MCF 10A (cell line): ENCODE measurements at regions of chr9 and their contacts with region 1.

Region 1: GRCh38 chr9:6055213-6055612 is 39.8 kb upstream of the RANBP6 start:
- DNase-seq: peak; percentile 93
- H3K4me3 Mint-ChIP-seq: no peak overlapping the region
- H3K27ac Mint-ChIP-seq: no peak overlapping the region
- H3K4me1 Mint-ChIP-seq: peaks cover 11% of the 10 kb centered on the region
- H3K27me3 Mint-ChIP-seq: no peaks in the 10 kb centered on the region
- CTCF ChIP-seq: peak; percentile 72

Region 2: GRCh38 chr9:5799314-5799713 is 255.9 kb before region 1 on chr9:
- CTCF ChIA-PET with region 1: interaction called, 5 read pairs
- POLR2A ChIA-PET with region 1: interaction called, 4 read pairs
- intact Hi-C with region 1: loop called (anchors 1 kb)
- DNase-seq: peak; percentile 55
- H3K4me3 Mint-ChIP-seq: no peak overlapping the region
- H3K27ac Mint-ChIP-seq: no peak overlapping the region
- H3K4me1 Mint-ChIP-seq: peaks cover 6% of the 10 kb centered on the region
- H3K27me3 Mint-ChIP-seq: no peaks in the 10 kb centered on the region
- CTCF ChIP-seq: peak; percentile 70

Region 3: GRCh38 chr9:6015278-6016157 is 39.7 kb before region 1 on chr9 and contains the start of gene RANBP6:
- CTCF ChIA-PET with region 1: interaction called, 13 read pairs
- POLR2A ChIA-PET with region 1: interaction called, 16 read pairs
- intact Hi-C with region 1: no loop called
- DNase-seq: peak; percentile 85
- H3K4me3 Mint-ChIP-seq: peak within 1 kb of the TSS; percentile 99
- H3K27ac Mint-ChIP-seq: peak within 1 kb of the TSS; percentile 93
- H3K4me1 Mint-ChIP-seq: peaks cover 31% of the 10 kb centered on the region
- H3K27me3 Mint-ChIP-seq: no peaks in the 10 kb centered on the region
- CTCF ChIP-seq: no peak
- total RNA-seq, gene RANBP6: 13.9 and 18.2 TPM in 2 replicates

Region 4: DNA sequence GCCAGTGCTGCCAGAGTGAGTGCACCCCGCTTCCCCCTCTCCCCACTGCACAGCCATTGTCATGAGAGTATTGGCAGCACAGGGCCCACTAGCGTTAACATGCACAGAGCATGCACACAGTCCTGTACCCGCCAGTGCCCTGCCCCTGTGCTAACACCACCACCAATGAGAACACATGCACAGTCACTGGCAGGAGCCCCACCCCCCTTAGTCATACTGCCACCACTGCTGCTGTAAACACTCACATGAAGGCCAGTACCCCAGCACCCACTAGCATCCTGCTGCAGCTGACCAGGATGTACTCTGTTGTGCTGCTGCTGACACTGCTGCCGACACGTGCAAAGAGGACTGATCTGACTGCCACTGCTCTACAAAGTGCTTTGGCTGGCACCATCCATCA is 20.3 kb before region 1 on chr9:
- CTCF ChIA-PET with region 1: interaction called, 22 read pairs
- POLR2A ChIA-PET with region 1: no interaction called
- intact Hi-C with region 1: no loop called
- DNase-seq: peak; percentile 22
- H3K4me3 Mint-ChIP-seq: no peak overlapping the region
- H3K27ac Mint-ChIP-seq: no peak overlapping the region
- H3K4me1 Mint-ChIP-seq: no peaks in the 10 kb centered on the region
- H3K27me3 Mint-ChIP-seq: no peaks in the 10 kb centered on the region
- CTCF ChIP-seq: no peak

Region 5: GRCh38 chr9:6106576-6107339 is 51.5 kb after region 1 on chr9:
- CTCF ChIA-PET with region 1: interaction called, 5 read pairs
- POLR2A ChIA-PET with region 1: interaction called, 3 read pairs
- intact Hi-C with region 1: loop called (anchors 1 kb)
- DNase-seq: peak; percentile 61
- H3K4me3 Mint-ChIP-seq: no peak overlapping the region
- H3K27ac Mint-ChIP-seq: no peak overlapping the region
- H3K4me1 Mint-ChIP-seq: peaks cover 35% of the 10 kb centered on the region
- H3K27me3 Mint-ChIP-seq: no peaks in the 10 kb centered on the region
- CTCF ChIP-seq: peak; percentile 40

Region 6: DNA sequence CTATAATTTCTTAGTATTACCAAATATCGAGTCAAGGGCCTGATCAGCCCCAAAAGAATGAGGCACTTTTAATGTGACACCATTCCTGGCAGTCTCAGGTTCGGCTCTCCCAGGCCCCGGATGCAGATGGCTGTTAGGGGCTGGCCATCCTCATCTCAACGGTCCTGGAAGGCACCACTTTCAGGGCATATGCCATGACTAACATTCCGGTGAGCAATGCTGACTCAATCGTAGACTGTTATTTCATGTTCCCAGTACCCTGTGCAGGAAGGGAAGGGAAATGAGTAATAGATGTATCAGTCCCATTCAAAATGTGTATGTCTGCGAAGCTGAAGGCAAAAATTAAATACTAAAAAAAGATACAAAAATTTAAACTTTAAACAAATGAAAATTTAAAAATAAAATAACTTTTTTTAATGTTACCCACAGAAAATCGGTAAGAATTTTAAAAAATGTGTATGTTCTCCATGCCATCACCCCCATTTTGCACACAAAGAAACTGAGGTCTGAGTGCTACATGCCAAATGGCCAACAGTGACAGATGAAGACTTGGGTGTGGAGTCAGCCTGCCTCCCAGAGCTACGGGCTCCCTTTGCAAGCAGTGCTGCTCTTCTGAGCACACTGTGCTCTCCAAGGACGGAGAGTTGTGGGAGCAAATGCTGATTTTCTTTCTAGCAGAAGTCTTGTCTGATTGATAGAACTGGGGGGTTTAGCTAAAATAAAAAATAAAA is 511.4 kb after region 1 on chr9:
- CTCF ChIA-PET with region 1: no interaction called
- POLR2A ChIA-PET with region 1: no interaction called
- intact Hi-C with region 1: loop called (anchors 1 kb)
- DNase-seq: peak; percentile 98
- H3K4me3 Mint-ChIP-seq: peak overlapping the region; percentile 64
- H3K27ac Mint-ChIP-seq: peak overlapping the region; percentile 64
- H3K4me1 Mint-ChIP-seq: peaks cover 19% of the 10 kb centered on the region
- H3K27me3 Mint-ChIP-seq: no peaks in the 10 kb centered on the region
- CTCF ChIP-seq: no peak